PC-9 (cell line): ENCODE measurements at regions of chr11 and their contacts with region 1.

Region 1: GRCh38 chr11:69801519-69802335 is 17.5 kb downstream of the FGF3 start:
- DNase-seq: peak in 1 of 2 experiments; percentile 56
- H3K4me3 ChIP-seq: no peak overlapping the region
- H3K27ac ChIP-seq: no peak overlapping the region
- H3K4me1 ChIP-seq: peaks cover 2% of the 10 kb centered on the region
- H3K27me3 ChIP-seq: no peaks in the 10 kb centered on the region
- CTCF ChIP-seq: peak; percentile 98

Region 2: DNA sequence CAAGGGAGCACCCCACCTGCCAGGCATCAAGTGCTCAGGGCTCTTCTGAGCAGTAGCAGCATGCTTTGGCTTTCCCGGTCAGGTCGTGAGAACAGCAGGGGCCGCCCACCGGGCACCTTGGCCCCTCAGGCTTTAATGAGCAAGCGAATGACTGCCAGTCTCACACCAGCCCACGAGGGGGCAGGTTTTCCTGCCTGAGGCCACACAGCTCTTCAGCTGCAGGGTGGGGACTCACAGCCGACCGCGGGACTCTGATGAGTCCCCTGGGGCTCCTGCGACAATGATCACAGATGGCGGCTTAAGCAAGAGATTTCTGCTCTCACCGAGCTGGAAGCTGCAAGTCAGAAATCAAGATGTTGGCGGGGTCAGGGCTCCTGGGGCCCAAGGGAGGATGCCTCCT is 83.6 kb before region 1 on chr11:
- CTCF ChIA-PET with region 1: no interaction called
- POLR2A ChIA-PET with region 1: no interaction called
- intact Hi-C with region 1: loop called (anchors 2 kb)
- DNase-seq: peak; percentile 47 to 61
- H3K4me3 ChIP-seq: no peak overlapping the region
- H3K27ac ChIP-seq: no peak overlapping the region
- H3K4me1 ChIP-seq: no peaks in the 10 kb centered on the region
- H3K27me3 ChIP-seq: no peaks in the 10 kb centered on the region
- CTCF ChIP-seq: peak; percentile 83

Region 3: GRCh38 chr11:70191495-70192140 is 389.9 kb after region 1 on chr11:
- CTCF ChIA-PET with region 1: no interaction called
- POLR2A ChIA-PET with region 1: no interaction called
- intact Hi-C with region 1: loop called (anchors 10 kb)
- DNase-seq: peak; percentile 62 to 90
- H3K4me3 ChIP-seq: no peak overlapping the region
- H3K27ac ChIP-seq: no peak overlapping the region
- H3K4me1 ChIP-seq: peaks cover 13% of the 10 kb centered on the region; the same call in 1 of the 2 replicates
- H3K27me3 ChIP-seq: no peaks in the 10 kb centered on the region
- CTCF ChIP-seq: peak; percentile 93